OCI-LY7 (cell line): ENCODE measurements at regions of chr2 and their contacts with region 1.

Region 1: DNA sequence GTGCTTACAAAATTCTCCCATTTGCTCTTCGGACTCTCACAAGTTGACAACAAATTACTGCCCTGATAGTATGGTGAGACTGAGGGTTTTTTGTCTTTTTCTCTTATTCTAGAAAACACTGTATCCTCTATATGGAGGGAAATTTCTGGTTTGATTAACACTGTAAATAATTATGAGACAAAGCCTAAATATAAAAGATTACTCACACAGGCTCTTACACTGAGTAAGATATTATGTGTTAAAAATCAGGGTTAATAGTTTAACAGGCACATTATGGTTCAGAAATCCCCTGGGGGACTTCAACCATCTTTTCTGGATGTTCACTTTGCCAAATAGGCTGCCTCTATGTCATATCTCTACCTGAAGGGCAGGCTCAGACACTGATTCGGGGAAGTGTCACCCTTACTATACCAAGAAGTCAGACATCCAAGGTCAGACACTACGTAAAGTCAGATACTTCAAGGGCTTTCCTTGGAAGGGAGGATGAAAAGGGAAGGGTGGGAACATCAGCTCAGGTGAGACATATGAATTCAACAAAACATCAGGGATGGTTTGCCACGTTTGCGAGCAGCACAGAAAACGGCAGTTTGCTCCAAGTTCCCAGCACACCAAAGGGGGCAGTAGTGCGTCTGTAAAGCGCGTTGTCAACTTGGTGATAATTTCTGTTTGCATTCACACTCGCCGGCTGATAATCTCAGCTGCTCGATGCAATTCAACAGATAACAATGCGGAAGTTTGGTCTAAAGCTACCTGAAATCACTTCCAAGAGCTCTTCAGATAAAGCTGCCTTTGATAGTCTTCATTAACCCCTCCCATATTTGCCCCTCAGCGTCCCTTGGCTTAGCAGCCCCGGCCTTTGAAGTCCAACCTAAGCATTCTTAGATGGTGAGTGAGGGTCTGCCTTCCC is 972 bp upstream of the RASGRP3 start:
- DNase-seq: peak; percentile 89
- H3K4me3 ChIP-seq: peak overlapping the region; percentile 72
- H3K27ac ChIP-seq: peak overlapping the region; percentile 80
- H3K4me1 ChIP-seq: peaks cover 36% of the 10 kb centered on the region
- CTCF ChIP-seq: peak; percentile 90

Region 2: DNA sequence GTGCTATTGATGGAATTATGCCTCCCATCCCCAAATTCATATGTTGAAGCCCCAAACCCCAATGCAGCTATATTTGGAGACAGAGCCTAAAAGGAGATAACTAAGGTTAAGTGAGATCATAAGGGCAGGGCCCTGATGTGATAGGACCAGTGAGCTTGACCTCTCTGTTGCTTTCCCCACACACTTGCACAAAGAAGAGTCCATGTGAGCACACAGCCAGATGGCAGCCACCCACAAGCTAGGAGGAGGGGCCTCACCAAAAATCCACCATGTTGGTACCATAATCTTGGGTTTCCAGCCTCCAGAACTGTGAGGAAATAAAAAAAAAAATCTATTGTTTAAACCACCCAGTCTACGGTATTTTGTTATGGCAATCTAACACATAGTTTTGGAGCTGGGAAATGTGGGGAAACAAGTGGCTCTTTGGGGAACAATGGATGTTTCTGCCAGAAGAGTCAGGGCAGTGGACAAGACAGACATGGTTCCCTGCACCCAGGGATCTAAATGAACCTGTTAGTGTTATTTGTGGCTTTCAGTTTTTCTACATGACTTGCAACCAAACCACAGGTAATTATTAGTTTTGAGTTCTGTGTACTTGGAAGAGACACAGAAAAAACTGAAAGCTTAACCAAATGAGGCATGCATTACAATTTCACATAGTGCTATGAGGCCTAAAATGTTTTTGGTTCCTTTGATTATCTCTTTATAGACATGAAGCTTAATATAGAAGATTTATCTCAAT is 269.6 kb before region 1 on chr2:
- CTCF ChIA-PET with region 1: no interaction called
- POLR2A ChIA-PET with region 1: no interaction called
- intact Hi-C with region 1: no loop called
- DNase-seq: no peak
- H3K4me3 ChIP-seq: no peak overlapping the region
- H3K27ac ChIP-seq: no peak overlapping the region
- H3K4me1 ChIP-seq: peaks cover 8% of the 10 kb centered on the region
- CTCF ChIP-seq: no peak

Region 3: DNA sequence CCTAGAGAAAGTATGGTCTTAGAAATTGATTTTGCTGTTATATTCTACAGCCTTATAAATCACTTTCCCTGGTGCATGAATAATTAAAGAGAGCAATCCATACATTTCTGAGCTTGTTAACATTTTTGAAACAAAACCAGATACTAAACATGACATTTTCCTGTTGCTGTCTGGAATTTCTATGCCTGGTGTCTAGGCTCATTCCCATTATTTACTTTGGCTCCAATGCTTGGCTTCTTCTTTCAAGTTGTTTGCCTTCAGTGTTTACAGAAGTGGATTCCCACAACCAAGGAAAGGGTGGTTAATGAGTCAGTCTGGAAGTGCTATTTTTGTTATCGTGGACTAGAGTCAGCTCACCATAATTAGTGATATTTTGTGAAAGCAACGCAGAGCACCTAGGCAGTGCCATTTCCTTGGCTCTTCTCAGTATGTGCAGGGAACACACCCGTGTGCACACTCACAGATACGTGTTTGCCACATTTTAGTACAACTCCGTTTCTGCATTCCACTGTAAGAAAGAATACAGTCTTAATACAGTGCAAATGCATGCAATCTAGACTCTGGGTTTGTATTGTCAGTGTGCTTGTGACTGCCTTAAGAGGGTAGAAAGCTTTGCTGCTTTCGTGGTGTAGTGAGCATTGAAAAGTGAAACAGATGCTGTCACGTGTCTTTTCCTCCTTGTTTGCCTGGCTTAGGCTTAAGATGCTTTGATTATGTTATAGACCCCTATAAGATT is 184.0 kb before region 1 on chr2:
- CTCF ChIA-PET with region 1: no interaction called
- POLR2A ChIA-PET with region 1: no interaction called
- intact Hi-C with region 1: no loop called
- DNase-seq: no peak
- H3K4me3 ChIP-seq: no peak overlapping the region
- H3K27ac ChIP-seq: no peak overlapping the region
- H3K4me1 ChIP-seq: peaks cover 6% of the 10 kb centered on the region
- CTCF ChIP-seq: no peak

Region 4: GRCh38 chr2:33530690-33531548 is 55.4 kb after region 1 on chr2:
- CTCF ChIA-PET with region 1: no interaction called
- POLR2A ChIA-PET with region 1: no interaction called
- intact Hi-C with region 1: loop called (anchors 1 kb)
- DNase-seq: peak; percentile 16
- H3K4me3 ChIP-seq: peak overlapping the region; percentile 44
- H3K27ac ChIP-seq: peak overlapping the region; percentile 66
- H3K4me1 ChIP-seq: peaks cover 50% of the 10 kb centered on the region
- CTCF ChIP-seq: no peak

Region 5: DNA sequence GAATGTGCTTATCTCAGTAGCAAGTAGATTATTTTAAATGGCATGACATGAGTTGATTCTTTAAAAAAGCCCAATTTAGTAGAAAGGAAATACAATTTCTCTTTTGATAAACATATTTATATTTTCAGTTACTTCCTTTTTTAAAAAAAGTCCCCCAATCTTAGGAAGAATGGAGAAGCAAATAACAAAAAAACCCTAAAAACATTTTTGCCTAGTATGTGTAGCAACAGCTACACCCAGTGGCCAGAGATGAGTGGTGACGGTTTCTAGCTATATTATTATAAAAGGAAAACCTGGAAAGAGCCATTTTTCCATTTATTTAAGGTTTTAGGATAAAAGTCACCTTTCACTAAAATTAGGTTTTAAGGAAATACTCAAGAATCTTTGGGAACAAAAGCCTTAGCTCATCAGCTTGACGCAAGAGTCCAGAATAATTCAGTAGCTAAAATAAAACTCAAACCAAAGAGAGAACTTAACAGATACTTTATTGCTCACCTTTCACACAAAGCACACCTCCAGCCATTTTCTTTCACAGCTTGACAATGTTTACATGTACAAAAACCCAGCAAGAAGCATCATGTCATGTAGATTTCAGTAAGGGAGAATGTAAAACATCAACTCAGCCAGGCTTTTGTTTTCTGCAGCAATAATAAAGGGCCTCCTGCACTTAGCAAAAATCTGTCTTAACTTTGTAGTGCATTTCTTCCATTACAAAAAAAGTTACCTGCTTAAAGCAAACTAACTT is 107.9 kb after region 1 on chr2:
- CTCF ChIA-PET with region 1: interaction called, 3 read pairs
- POLR2A ChIA-PET with region 1: interaction called, 3 read pairs
- intact Hi-C with region 1: loop called (anchors 1 kb)
- DNase-seq: peak; percentile 53
- H3K4me3 ChIP-seq: no peak overlapping the region
- H3K27ac ChIP-seq: no peak overlapping the region
- H3K4me1 ChIP-seq: peaks cover 3% of the 10 kb centered on the region
- CTCF ChIP-seq: peak; percentile 99

Region 6: GRCh38 chr2:33599175-33599942 is 123.9 kb after region 1 on chr2 and contains the start of gene FAM98A:
- CTCF ChIA-PET with region 1: interaction called, 7 read pairs
- POLR2A ChIA-PET with region 1: interaction called, 12 read pairs
- intact Hi-C with region 1: loop called (anchors 5 kb)
- DNase-seq: peak; percentile 99
- H3K4me3 ChIP-seq: peak within 1 kb of the TSS; percentile 93
- H3K27ac ChIP-seq: peak within 1 kb of the TSS; percentile 51
- H3K4me1 ChIP-seq: peaks cover 19% of the 10 kb centered on the region
- CTCF ChIP-seq: no peak; the same call in 1 of the 2 replicates
- total RNA-seq, gene FAM98A: 33.2 and 35.7 TPM in 2 replicates